ENCODE measurements at regions of chr13 and their contacts with region 1.

Region 1: GRCh38 chr13:39616087-39616694 is 13.2 kb upstream of the LHFPL6 start:
- DNase-seq: no peak
- H3K4me3 ChIP-seq: no peak overlapping the region
- H3K27ac ChIP-seq: no peak overlapping the region
- H3K4me1 ChIP-seq: no peaks in the 10 kb centered on the region; the same call in 1 of the 2 replicates
- H3K27me3 ChIP-seq: no peaks in the 10 kb centered on the region
- CTCF ChIP-seq: peak; percentile 83

Region 2: GRCh38 chr13:39144941-39145533 is 471.2 kb before region 1 on chr13:
- CTCF ChIA-PET with region 1: interaction called, 5 read pairs
- POLR2A ChIA-PET with region 1: no interaction called
- intact Hi-C with region 1: loop called (anchors 2 kb)
- DNase-seq: peak in 1 of 2 experiments; percentile 30
- H3K4me3 ChIP-seq: no peak overlapping the region
- H3K27ac ChIP-seq: no peak overlapping the region
- H3K4me1 ChIP-seq: no peaks in the 10 kb centered on the region; the same call in 1 of the 2 replicates
- H3K27me3 ChIP-seq: peaks cover 11% of the 10 kb centered on the region
- CTCF ChIP-seq: peak; percentile 67

Region 3: DNA sequence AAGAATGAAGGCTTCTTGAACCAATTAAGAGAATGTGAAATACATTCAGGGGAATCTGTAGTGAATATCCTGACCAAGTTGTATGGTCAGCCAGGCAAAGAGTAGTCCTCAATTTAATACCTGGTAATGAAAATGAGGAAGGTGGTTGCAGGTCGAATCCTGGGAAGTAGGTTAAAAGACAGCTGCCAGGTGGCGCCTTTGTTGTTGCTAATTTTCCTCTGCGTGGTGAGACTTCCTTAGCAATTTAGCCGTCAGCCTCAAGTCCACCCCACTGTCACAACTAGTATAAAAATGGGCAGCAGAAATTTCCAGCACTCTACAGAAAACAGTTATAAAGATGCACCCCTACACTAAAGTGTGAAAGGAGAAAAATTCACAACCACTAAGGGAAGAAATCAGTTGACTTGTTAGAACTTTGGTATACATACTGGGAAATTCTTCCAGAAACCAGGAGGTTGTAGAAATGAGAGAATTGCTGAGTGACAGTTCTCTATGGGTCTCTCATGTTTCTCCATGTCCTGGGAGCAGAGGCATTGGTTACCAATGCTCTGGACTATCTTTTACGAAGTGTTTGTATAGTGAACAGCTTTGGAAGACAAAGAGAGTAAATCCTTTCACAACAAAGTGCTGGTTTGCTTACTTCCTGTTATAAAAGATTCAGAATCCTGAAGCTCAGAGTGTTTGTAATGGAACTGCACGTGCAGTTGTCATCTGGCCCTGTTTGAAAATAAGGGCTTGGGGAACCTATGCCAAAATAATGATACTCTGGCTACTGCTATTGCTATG is 342.0 kb before region 1 on chr13:
- CTCF ChIA-PET with region 1: no interaction called
- POLR2A ChIA-PET with region 1: no interaction called
- intact Hi-C with region 1: loop called (anchors 2 kb)
- DNase-seq: peak in 1 of 2 experiments; percentile 12
- H3K4me3 ChIP-seq: no peak overlapping the region
- H3K27ac ChIP-seq: no peak overlapping the region
- H3K4me1 ChIP-seq: no peaks in the 10 kb centered on the region
- H3K27me3 ChIP-seq: no peaks in the 10 kb centered on the region; the same call in 1 of the 2 replicates
- CTCF ChIP-seq: no peak

Region 4: GRCh38 chr13:39415008-39415802 is 201.0 kb before region 1 on chr13:
- CTCF ChIA-PET with region 1: interaction called, 4 read pairs
- POLR2A ChIA-PET with region 1: no interaction called
- intact Hi-C with region 1: loop called (anchors 1 kb)
- DNase-seq: peak in 1 of 2 experiments; percentile 6
- H3K4me3 ChIP-seq: no peak overlapping the region
- H3K27ac ChIP-seq: no peak overlapping the region
- H3K4me1 ChIP-seq: no peaks in the 10 kb centered on the region
- H3K27me3 ChIP-seq: no peaks in the 10 kb centered on the region
- CTCF ChIP-seq: peak; percentile 43; the same call in 1 of the 2 replicates

Measured in PC-9 (cell line).